ACHN (cell line): ENCODE measurements at regions of chr12 and their contacts with region 1.

Region 1: DNA sequence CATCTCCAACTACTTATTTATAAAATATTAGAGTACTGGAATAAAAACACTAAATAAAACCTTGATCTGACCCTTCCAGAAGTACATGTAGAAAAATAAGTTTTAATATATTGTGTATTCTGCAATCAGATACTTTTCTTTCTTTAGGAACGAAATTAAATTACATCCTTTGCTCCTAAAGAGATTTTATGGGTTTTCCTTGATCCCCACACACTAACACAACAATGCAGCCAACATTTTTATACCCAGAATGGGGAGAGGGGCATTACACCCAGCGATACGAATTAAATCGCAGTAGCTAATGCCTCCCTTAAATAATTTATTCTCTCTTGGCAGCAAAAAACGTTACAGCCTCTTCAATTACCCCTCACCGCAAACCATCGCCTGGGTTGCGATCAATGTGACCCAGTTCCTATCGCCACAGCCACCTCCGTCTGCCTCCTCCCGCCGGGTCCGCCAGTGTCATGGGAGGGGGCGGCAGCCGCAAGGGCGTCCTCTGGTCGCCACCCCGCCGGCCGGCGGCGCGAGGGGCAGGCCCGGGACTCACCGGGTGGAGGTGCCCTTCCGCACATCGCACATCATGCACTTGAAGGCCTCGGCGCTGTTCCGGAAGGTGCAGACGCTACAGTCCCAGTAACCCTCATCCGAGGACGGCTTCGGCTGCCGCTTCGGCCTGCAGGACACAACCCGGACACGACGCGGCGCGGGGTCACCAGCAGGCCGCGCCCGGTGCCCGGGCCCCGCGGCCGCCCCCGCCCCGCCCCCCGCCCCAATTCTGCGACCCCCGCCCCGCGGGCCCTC is 796 bp downstream of the YAF2 start:
- DNase-seq: peak; percentile 92

Region 2: DNA sequence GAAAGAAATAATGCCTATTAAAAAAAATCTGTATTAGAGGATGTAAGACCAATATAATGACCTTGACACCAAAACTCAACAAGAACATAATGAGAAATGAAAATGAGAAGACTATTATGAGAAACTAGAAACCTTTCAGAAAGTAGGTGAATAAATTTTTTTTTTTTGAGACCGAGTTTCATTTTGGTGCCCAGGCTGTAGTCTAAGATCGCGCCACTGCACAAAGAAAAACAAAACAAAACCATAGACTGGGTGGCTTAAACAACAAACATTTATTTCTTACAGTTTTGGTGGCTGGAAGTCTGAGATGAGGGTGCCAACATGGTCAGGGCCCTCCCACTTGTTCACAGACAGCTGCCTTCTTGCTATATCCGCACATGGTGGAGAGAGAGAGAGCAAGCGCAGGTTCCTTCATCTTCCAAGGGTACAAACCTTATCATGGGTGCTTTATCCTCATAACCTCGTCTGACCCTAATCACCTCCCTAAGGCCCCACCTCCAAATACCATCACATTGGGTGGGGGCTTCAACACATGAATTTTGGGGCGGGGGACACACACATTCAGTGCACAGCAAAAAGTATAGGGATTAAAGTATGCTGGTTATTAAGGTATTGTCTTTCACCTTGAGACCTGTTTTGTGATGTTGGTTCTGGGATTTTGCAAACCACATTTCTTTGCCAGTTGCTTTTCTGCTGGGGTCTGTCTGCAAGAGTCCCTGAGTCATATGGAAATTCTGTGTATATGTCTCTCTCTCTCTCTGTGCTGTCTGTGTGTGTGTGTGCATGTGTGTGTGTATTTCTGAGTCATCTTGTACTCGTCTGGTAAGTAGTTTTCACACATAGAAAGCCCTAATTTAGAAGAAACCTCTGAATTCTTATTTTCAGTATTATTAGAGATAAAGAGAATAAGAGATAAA is 62.4 kb after region 1 on chr12:
- in situ Hi-C with region 1: loop called (anchors 10 kb)
- DNase-seq: no peak